HEK293 (cell line): ENCODE measurements at regions of chrX and their contacts with region 1.

Region 1: DNA sequence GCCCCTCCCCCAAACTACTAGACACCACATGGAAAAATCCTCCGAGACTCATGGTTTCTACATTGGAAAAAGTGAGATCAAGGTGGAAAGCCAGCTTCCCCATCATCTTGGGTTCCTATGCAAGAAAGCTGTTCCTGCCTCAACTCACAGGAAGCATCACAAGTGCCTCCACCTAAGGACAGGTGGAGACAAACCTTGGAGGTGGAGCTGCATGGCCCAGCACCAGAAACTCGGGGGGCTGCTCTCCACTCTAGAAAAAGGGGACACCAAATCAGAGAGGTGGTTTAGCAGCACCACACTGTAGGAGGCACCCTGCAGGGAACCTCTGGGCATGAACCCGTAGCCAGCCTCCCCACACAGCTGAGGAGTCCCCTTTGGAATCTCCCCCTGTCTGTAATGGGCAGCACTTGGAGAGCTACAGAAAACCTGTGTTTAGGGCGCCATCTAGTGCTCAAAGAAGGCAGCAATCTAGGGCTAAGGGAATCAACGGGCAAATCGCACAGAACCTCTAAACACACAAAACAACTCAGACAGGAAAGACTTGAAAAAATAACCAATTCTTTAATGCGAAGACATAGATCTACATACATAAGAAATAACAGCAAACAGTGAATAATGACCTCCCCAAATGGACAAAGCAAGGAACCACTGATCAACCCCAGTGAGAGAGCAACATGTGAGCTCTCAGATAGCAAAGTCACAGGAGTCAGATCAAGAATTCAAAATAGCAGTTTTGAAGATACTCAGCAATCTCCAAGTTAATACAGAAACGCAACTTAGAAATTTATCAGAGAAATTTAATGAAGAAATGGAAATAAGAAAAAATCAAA is 37.0 kb upstream of the ZBTB33 start:
- H3K4me3 ChIP-seq: no peak overlapping the region
- H3K27ac ChIP-seq: no peak overlapping the region
- H3K4me1 ChIP-seq: no peaks in the 10 kb centered on the region
- CTCF ChIP-seq: peak; percentile 51

Region 2: DNA sequence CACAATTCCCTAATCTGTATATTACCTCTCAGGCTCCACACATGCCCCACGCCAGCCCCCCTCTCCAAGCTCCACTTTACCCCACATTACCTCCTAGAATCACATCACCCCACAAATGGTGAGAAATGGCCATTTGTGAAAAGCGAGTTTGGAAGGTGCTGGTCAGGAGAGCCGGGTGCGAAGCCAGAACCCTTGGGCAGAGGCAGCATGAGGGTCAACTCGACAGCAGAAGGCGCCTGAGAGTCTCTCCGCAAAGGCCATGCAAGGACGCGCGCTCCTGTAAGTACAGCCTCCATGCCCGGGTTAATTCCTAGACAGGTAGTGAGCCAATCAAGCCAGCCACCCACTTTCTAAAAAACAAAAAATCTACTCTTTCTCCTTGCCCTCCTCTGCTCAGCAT is 12.8 kb before region 1 on chrX:
- CTCF ChIA-PET with region 1: interaction called, 23 read pairs
- POLR2A ChIA-PET with region 1: no interaction called
- H3K4me3 ChIP-seq: no peak overlapping the region
- H3K27ac ChIP-seq: no peak overlapping the region
- H3K4me1 ChIP-seq: no peaks in the 10 kb centered on the region
- CTCF ChIP-seq: no peak

Region 3: DNA sequence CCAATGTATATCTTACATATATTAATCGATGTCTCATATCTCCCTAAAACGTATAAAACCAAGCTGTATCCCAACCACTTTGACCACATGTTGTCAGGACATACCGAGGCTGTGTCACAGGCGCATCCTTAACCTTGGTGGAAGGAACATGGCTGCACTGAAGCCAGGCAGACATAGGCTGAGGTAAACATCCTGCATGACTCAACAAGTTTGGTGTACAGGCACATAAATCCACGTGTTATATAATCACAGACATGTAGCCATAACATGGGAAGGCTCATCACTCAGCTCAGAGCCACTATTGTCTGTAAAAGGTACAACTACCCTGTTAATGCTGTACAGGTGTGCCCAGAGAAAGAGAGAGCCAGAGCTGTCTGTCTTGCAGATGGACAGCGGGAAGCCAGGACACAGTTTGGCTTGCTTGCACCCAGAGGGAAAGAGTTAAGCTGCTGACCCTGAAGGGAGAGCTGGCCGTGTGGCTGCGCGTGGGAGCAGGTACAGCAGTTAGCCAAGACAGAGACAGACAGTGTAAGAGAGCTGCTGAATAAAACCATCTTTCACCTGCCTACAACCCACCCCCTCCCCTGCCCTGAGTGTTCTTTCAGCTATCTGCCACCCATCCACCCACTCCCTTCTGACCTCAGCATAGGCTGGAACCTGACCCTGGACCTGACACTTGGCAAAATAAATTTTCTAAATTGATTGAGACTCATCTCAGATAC is 14.7 kb after region 1 on chrX:
- CTCF ChIA-PET with region 1: interaction called, 41 read pairs
- POLR2A ChIA-PET with region 1: no interaction called
- H3K4me3 ChIP-seq: no peak overlapping the region
- H3K27ac ChIP-seq: no peak overlapping the region
- H3K4me1 ChIP-seq: no peaks in the 10 kb centered on the region
- CTCF ChIP-seq: no peak